ENCODE measurements at regions of chr14 and their contacts with region 1.

Region 1: GRCh38 chr14:52706724-52707706 is at the start of gene PSMC6:
- DNase-seq: peak; percentile 89
- ATAC-seq: peak; percentile 98
- H3K4me3 ChIP-seq: peak within 1 kb of the TSS; percentile 85 to 94 (median 87)
- H3K27ac ChIP-seq: peak within 1 kb of the TSS; percentile 99
- H3K4me1 ChIP-seq: peaks cover 44% of the 10 kb centered on the region
- H3K27me3 ChIP-seq: no peaks in the 10 kb centered on the region; a peak in 1 of 5 replicates
- CTCF ChIP-seq: 0 out of 2 replicates have a peak, but pooled peaks have one; percentile 9
- EP300 ChIP-seq: no peak
- POLR2A ChIP-seq: peak; percentile 90 to 96
- RAD21 ChIP-seq: no peak
- total RNA-seq, gene PSMC6: 210 and 318 TPM in 2 replicates

Region 2: DNA sequence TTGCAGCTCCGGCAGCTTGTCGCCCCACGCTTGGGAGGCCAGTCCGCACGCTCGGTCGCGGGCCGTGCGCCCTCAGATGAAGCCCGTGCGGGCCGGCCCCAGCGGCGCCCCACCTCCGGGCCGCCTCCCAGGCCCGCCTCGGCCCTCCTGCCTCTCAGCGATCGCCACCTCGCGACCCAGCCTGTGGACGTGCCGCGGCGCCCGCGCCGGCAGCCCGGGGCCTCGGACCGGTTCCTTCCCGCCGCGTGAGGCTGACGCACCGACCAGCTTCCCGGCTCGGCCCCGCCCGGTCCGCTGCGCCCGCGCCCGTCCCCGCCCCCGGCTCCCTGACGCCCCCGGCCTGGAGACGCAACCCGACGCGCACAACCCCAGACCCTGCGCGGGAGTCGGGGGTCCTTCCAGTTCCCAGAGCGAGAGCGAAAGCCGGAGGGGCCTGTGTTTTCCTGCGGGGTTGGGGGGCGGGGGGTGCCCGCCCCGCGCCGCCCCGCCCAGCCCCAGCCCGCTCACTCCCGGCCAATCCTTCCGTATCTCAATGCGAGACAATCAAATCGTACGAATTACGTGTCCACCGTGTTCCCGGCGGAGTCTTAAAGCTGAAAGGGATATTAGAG is 11.4 kb before region 1 on chr14 and contains the start of gene ERO1A:
- CTCF ChIA-PET with region 1: no interaction called
- POLR2A ChIA-PET with region 1: interaction called, 26 read pairs
- in situ Hi-C with region 1: no loop called
- intact Hi-C with region 1: no loop called
- DNase-seq: peak; percentile 50
- ATAC-seq: peak; percentile 89
- H3K4me3 ChIP-seq: peak within 1 kb of the TSS; percentile 75 to 90 (median 86)
- H3K27ac ChIP-seq: peak within 1 kb of the TSS; percentile 80
- H3K4me1 ChIP-seq: peaks cover 77% of the 10 kb centered on the region
- H3K27me3 ChIP-seq: no peaks in the 10 kb centered on the region; a peak in 1 of 5 replicates
- CTCF ChIP-seq: peak; percentile 8; the same call in 1 of the 2 replicates
- EP300 ChIP-seq: no peak
- POLR2A ChIP-seq: peak; percentile 34 to 59; a peak in 1 of 4 replicates
- RAD21 ChIP-seq: peak; percentile 46
- total RNA-seq, gene ERO1A: 39.5 and 60.3 TPM in 2 replicates